ENCODE measurements at regions of chr11 and their contacts with region 1.

Region 1: GRCh38 chr11:32006799-32007388 is 84.0 kb upstream of the RCN1 start:
- DNase-seq: no peak
- H3K4me3 Mint-ChIP-seq: no peak overlapping the region
- H3K27ac Mint-ChIP-seq: no peak overlapping the region
- H3K4me1 Mint-ChIP-seq: no peaks in the 10 kb centered on the region
- H3K27me3 Mint-ChIP-seq: peaks cover 17% of the 10 kb centered on the region

Region 2: GRCh38 chr11:31240338-31240904 is 766.5 kb before region 1 on chr11:
- intact Hi-C with region 1: loop called (anchors 5 kb)
- DNase-seq: no peak
- H3K4me3 Mint-ChIP-seq: no peak overlapping the region
- H3K27ac Mint-ChIP-seq: no peak overlapping the region
- H3K4me1 Mint-ChIP-seq: no peaks in the 10 kb centered on the region
- H3K27me3 Mint-ChIP-seq: no peaks in the 10 kb centered on the region